Endothelial cell of umbilical vein (primary cell): ENCODE measurements at regions of chr2 and their contacts with region 1.

Region 1: DNA sequence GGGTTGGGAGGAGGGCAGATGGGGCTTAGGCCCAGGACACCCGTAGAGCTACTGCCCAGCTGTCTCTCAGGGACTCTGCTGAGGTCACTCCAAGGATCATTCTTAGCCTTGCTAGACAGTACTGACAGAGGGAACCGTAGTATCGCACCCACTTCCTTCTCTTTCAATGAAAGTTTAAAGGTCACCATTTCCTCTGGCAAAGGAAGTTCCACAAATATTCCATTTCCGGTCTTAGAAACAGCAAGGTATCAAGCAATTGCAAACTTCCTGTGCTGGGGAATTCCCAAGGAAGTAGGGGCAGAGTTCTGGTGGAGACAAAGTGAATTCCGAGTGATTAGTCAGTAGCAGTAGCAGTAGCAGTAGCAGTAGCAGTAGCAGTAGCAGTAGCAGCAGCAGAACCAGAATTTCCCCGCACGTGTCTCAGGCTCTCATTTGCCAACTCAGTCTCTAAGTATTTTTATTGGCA is 24.7 kb downstream of the IL1B start:
- DNase-seq: peak; percentile 99
- H3K4me3 ChIP-seq: no peak overlapping the region
- H3K27ac ChIP-seq: peak overlapping the region; percentile 97
- H3K4me1 ChIP-seq: peaks cover 27% of the 10 kb centered on the region
- H3K27me3 ChIP-seq: no peaks in the 10 kb centered on the region
- CTCF ChIP-seq: no peak
- POLR2A ChIP-seq: peak; percentile 83

Region 2: DNA sequence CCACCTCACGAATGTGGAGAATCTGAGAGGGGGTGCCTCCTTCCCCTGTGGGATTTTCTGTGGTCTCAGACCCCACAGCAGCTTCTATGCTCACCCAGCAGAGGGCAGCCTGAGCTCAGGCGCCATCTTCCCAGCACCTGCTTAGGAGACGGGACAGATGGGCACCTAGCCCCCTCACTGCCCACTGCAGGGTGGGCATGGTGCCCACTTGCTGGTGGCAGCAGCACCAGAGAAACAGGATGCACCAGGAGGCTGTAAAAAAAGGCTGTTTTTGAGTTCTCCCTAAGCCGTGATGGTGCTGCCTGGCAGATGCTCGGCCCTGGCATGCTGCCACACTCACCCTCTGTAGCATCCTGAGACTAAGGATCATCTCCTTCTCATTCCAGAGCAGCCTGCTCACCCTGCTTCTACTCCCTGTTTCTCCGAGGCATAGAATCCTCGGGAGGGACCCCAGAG is 185.2 kb before region 1 on chr2:
- CTCF ChIA-PET with region 1: no interaction called
- POLR2A ChIA-PET with region 1: no interaction called
- dilution Hi-C with region 1: no loop called
- intact Hi-C with region 1: loop called (anchors 1 kb)
- DNase-seq: peak; percentile 86
- H3K4me3 ChIP-seq: peak overlapping the region in 1 of 3 experiments; percentile 14
- H3K27ac ChIP-seq: peak overlapping the region; percentile 91
- H3K4me1 ChIP-seq: peaks cover 73% of the 10 kb centered on the region
- H3K27me3 ChIP-seq: no peaks in the 10 kb centered on the region
- CTCF ChIP-seq: peak; percentile 93
- POLR2A ChIP-seq: no peak

Region 3: GRCh38 chr2:112749755-112750559 is 61.9 kb before region 1 on chr2:
- CTCF ChIA-PET with region 1: interaction called, 15 read pairs
- POLR2A ChIA-PET with region 1: no interaction called
- dilution Hi-C with region 1: no loop called
- intact Hi-C with region 1: loop called (anchors 1 kb)
- DNase-seq: peak; percentile 67
- H3K4me3 ChIP-seq: no peak overlapping the region
- H3K27ac ChIP-seq: peak overlapping the region; percentile 28
- H3K4me1 ChIP-seq: no peaks in the 10 kb centered on the region
- H3K27me3 ChIP-seq: no peaks in the 10 kb centered on the region
- CTCF ChIP-seq: peak; percentile 91 to 96
- POLR2A ChIP-seq: no peak

Region 4: DNA sequence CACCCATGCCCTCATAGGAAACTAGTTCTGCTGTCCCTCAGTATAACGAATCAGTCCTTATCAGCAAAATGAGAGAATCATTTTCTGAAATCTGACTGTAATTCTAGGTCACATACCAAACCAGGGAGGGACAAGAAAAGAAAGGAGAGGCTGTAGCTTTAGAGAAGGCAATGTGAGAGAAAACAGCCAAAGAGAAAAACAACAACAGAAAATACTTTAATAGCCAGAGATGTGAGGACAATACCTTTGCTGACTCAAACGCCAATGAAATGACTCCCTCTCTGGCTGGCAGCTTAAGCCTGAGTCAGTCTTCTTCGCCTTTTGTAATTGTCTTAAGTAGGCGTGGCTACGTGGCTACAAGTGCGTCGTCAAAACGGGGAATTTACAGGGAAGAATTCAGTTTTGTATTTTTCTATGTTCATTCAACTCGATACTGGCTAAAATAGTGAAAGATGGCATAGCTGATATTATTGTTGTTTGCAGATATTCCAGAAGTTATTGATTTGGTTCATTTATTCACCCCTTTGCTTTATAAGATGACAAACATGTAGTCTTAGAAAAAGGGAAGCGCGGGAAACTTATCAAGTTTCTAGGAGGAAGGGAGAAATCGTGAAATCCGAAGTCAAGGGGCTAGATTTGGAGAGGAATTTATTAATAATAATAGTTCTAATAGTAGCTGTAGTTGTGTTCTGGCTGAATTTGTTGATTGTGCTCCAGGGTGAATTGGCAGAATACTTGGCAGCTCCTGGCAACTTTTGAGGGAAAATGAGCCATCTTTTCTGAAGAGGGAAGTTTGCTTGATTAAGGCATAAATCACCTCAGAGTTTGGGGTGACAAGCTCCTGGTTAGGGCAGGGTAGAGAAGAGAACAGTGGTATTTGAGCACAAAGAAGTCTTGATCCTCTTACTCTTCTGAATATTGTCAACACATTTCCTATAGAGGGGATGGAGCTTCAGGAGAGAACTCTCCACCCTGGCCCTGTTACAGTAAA is 27.4 kb before region 1 on chr2 and contains the start of gene IL1A:
- CTCF ChIA-PET with region 1: interaction called, 6 read pairs
- POLR2A ChIA-PET with region 1: no interaction called
- dilution Hi-C with region 1: no loop called
- intact Hi-C with region 1: loop called (anchors 1 kb)
- DNase-seq: peak; percentile 73
- H3K4me3 ChIP-seq: peak within 1 kb of the TSS in 1 of 3 experiments; percentile 37
- H3K27ac ChIP-seq: peak within 1 kb of the TSS; percentile 73
- H3K4me1 ChIP-seq: peaks cover 43% of the 10 kb centered on the region
- H3K27me3 ChIP-seq: no peaks in the 10 kb centered on the region
- CTCF ChIP-seq: no peak
- POLR2A ChIP-seq: no peak
- total RNA-seq, gene IL1A: 0.99 and 1.4 TPM in 2 replicates

Region 5: DNA sequence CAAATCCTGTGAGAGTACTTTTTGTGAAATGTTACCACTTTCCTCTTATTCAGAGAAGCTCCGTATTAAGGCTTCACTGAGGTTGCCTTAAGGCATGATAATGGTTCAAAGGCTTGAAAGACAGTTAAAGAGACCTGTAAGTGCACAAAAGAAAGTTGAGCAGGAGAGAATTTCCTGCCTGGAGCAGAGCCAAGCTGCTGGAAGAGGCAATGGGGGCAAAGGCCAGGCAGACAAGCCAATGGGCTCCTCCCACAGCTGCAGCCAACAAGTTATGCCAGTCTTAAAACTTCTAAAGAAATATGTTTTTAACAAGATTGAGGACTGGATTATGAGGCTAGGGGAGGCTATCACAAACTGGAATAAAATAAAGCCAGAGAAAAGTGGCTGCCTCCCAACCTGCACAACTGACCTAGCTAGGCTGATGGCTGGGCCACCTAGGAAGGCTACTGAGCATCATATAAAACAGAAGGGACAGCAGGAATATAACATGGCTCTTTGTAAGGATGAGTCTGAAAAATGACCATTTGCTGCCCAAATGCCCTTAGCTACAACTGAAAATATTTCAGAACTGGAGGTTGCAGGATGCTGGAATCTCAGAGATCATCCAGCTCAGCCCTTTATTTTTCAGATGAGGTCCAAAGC is 22.6 kb after region 1 on chr2:
- CTCF ChIA-PET with region 1: interaction called, 6 read pairs
- POLR2A ChIA-PET with region 1: no interaction called
- dilution Hi-C with region 1: no loop called
- intact Hi-C with region 1: loop called (anchors 1 kb)
- DNase-seq: peak; percentile 28
- H3K4me3 ChIP-seq: no peak overlapping the region
- H3K27ac ChIP-seq: no peak overlapping the region
- H3K4me1 ChIP-seq: peaks cover 19% of the 10 kb centered on the region
- H3K27me3 ChIP-seq: peaks cover 0 to 12% of the 10 kb centered on the region in 2 experiments
- CTCF ChIP-seq: no peak
- POLR2A ChIP-seq: no peak

Region 6: DNA sequence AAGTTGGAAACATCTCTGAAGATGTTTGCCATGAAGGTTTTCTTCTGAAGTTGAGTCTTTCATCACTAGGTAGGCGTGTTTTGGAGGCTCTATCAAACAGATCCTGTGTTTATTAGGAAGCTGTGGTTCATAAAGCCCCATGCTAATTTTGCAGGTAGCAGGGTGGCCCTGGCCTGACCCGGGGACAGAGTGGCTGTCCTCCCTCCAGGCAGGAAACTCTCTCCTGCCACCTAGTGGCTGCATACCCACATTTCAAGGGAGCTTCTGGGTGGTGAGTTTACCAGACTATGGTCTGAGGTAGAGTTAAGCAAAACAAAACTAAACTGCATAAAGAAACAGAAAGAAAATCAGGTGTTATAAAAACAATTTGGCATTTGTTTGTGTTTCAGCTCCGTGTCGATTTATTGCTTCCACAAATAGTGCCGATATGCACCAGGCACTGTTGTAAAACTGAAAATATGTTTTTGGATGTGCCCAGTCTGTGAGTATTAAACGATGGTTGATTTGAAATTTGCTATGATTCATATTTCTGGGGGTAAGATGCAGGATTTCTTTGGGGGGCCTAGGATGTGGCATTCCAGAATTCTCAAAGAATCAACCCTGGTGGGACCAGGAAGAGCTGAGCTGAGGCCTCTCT is 73.1 kb after region 1 on chr2:
- CTCF ChIA-PET with region 1: interaction called, 25 read pairs
- POLR2A ChIA-PET with region 1: no interaction called
- dilution Hi-C with region 1: no loop called
- intact Hi-C with region 1: loop called (anchors 1 kb)
- DNase-seq: peak; percentile 38
- H3K4me3 ChIP-seq: no peak overlapping the region
- H3K27ac ChIP-seq: no peak overlapping the region
- H3K4me1 ChIP-seq: peaks cover 19% of the 10 kb centered on the region
- H3K27me3 ChIP-seq: no peaks in the 10 kb centered on the region
- CTCF ChIP-seq: peak; percentile 59 to 74
- POLR2A ChIP-seq: no peak